ENCODE measurements at regions of chr12 and their contacts with region 1.

Region 1: GRCh38 chr12:77388445-77389265 is 323.3 kb upstream of the E2F7 start:
- DNase-seq: no peak
- H3K4me3 ChIP-seq: no peak overlapping the region
- H3K27ac ChIP-seq: no peak overlapping the region
- H3K4me1 ChIP-seq: no peaks in the 10 kb centered on the region
- H3K27me3 ChIP-seq: no peaks in the 10 kb centered on the region
- CTCF ChIP-seq: no peak
- POLR2A ChIP-seq: no peak

Region 2: GRCh38 chr12:77023501-77023900 is 365.2 kb before region 1 on chr12:
- CTCF ChIA-PET with region 1: no interaction called
- POLR2A ChIA-PET with region 1: no interaction called
- dilution Hi-C with region 1: no loop called
- intact Hi-C with region 1: no loop called
- DNase-seq: no peak
- H3K4me3 ChIP-seq: no peak overlapping the region
- H3K27ac ChIP-seq: no peak overlapping the region
- H3K4me1 ChIP-seq: no peaks in the 10 kb centered on the region
- H3K27me3 ChIP-seq: no peaks in the 10 kb centered on the region
- CTCF ChIP-seq: no peak
- POLR2A ChIP-seq: no peak

Region 3: GRCh38 chr12:77247542-77247941 is 141.1 kb before region 1 on chr12:
- CTCF ChIA-PET with region 1: no interaction called
- POLR2A ChIA-PET with region 1: no interaction called
- dilution Hi-C with region 1: no loop called
- intact Hi-C with region 1: no loop called
- DNase-seq: no peak
- H3K4me3 ChIP-seq: no peak overlapping the region
- H3K27ac ChIP-seq: no peak overlapping the region
- H3K4me1 ChIP-seq: no peaks in the 10 kb centered on the region
- H3K27me3 ChIP-seq: peaks cover 3 to 7% of the 10 kb centered on the region in 2 experiments
- CTCF ChIP-seq: no peak
- POLR2A ChIP-seq: no peak

Region 4: GRCh38 chr12:77407931-77408330 is 19.3 kb after region 1 on chr12:
- CTCF ChIA-PET with region 1: interaction called, 10 read pairs
- POLR2A ChIA-PET with region 1: no interaction called
- dilution Hi-C with region 1: no loop called
- intact Hi-C with region 1: no loop called
- DNase-seq: no peak
- H3K4me3 ChIP-seq: no peak overlapping the region
- H3K27ac ChIP-seq: no peak overlapping the region
- H3K4me1 ChIP-seq: peaks cover 10% of the 10 kb centered on the region
- H3K27me3 ChIP-seq: no peaks in the 10 kb centered on the region
- CTCF ChIP-seq: no peak
- POLR2A ChIP-seq: no peak

Region 5: DNA sequence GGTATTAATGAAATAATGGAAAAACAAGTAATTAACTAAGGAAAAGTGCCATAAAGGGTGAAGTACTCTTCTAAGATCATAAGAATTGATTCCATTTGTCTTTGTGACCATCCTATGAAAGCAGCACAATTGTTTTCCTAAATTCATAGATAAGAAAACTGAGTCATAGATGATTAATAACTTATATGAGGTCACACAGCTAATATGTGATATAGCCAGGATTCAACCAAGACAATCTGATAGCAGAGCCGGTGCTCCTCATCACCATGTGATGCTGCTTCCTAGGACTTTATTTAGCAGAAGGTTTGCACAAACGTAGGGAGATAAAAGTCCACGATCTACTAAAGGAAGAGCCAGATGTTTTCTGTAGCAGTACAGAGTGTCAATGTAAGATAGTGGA is 1294.4 kb after region 1 on chr12:
- CTCF ChIA-PET with region 1: no interaction called
- POLR2A ChIA-PET with region 1: no interaction called
- dilution Hi-C with region 1: no loop called
- intact Hi-C with region 1: no loop called
- DNase-seq: peak; percentile 52
- H3K4me3 ChIP-seq: no peak overlapping the region
- H3K27ac ChIP-seq: peak overlapping the region; percentile 5
- H3K4me1 ChIP-seq: peaks cover 20% of the 10 kb centered on the region
- H3K27me3 ChIP-seq: no peaks in the 10 kb centered on the region
- CTCF ChIP-seq: no peak
- POLR2A ChIP-seq: no peak